ENCODE measurements at regions of chrX and their contacts with region 1.

Region 1: DNA sequence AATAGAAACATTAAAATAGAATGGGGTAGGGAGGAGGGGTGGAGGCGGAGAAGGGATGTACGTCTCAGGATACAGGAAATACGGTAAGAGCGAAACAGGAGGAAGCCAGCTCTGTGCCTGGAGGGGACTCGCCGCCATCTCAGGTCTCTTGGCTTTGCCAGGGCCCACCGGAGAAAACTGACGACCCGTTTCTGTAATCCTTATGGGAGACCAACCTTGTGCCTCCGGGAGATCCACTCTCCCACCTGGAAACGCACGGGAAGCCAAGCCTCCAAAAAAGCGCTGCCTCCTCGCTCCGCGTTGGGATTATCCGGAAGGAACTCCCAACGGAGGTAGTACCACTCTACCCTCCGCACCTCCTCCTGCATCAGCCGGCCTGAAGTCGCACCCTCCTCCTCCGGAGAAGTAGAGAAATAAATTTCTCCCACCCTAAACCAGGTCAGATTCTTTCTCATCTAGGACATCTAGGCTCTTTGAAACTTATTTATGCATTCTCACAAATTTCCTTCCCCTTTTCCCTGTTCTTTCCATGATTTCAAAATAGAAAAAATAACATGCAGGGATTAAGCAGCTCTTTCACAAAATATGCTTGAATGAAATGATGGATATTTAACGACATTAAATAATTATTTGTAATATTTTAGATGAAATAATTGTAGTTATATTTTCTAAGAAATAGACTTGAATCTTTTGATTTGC is at the start of gene NBDY:
- DNase-seq: peak; percentile 58
- H3K4me3 Mint-ChIP-seq: peak within 1 kb of the TSS; percentile 91
- H3K27ac Mint-ChIP-seq: peak within 1 kb of the TSS; percentile 19
- H3K4me1 Mint-ChIP-seq: no peaks in the 10 kb centered on the region
- H3K27me3 Mint-ChIP-seq: peaks cover 41% of the 10 kb centered on the region
- CTCF ChIP-seq: no peak
- total RNA-seq, gene NBDY: 54.0 and 66.4 TPM in 2 replicates

Region 2: GRCh38 chrX:55135171-55135570 is 1594.1 kb before region 1 on chrX:
- CTCF ChIA-PET with region 1: no interaction called
- POLR2A ChIA-PET with region 1: no interaction called
- intact Hi-C with region 1: loop called (anchors 5 kb)
- DNase-seq: peak; percentile 47
- H3K4me3 Mint-ChIP-seq: no peak overlapping the region
- H3K27ac Mint-ChIP-seq: no peak overlapping the region
- H3K4me1 Mint-ChIP-seq: no peaks in the 10 kb centered on the region
- H3K27me3 Mint-ChIP-seq: peaks cover 53% of the 10 kb centered on the region
- CTCF ChIP-seq: peak; percentile 45

Region 3: DNA sequence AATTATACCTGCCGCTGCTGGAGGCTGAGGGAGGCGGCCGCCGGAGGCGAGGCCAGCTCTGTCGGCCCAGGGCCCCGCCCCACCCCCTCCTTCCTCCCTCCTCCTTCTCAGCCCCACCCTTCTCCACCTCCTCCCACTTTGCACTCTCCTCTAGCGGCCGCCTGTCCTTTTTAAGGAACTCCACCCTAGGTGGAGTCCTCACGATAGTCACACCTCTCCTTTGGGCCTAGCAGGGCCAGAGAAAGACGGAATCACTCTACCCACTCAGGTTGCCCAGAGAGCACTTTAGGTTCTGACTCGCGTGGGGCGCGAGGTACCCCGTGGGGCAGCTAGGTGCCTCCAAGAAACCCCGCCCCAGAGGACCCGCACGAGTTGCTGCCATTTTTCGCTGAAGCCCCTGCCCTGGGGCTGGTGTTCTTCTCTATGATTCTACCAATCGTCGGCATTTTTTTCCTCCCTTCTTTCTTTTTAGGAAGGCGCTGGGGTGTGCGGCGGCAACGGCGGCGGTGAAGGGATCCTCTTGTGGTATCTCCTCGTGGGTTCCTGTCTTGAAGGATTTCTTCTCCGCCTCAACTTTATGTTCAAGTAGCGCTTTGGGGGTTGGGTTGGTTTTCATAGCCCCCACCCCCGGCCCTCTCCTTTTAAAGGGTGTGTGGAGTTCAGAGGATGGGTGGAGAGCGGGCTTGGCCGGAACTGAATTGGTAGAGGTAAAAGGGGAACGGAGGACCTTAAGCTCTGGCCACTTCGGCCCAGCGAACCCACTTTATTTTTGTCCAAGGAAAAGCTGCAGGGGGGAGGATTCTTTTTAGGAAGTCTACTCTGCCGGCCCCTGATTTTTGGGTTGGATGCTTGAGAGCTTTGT is 496.8 kb before region 1 on chrX and contains the start of gene KLF8:
- CTCF ChIA-PET with region 1: interaction called, 9 read pairs
- POLR2A ChIA-PET with region 1: interaction called, 11 read pairs
- intact Hi-C with region 1: loop called (anchors 2 kb)
- DNase-seq: peak; percentile 83
- H3K4me3 Mint-ChIP-seq: peak within 1 kb of the TSS; percentile 83
- H3K27ac Mint-ChIP-seq: peak within 1 kb of the TSS; percentile 84
- H3K4me1 Mint-ChIP-seq: peaks cover 13% of the 10 kb centered on the region
- H3K27me3 Mint-ChIP-seq: peaks cover 42% of the 10 kb centered on the region
- CTCF ChIP-seq: no peak
- total RNA-seq, gene KLF8: 12.6 and 14.0 TPM in 2 replicates

Region 4: GRCh38 chrX:56281789-56282188 is 447.5 kb before region 1 on chrX:
- CTCF ChIA-PET with region 1: interaction called, 66 read pairs
- POLR2A ChIA-PET with region 1: interaction called, 4 read pairs
- intact Hi-C with region 1: loop called (anchors 1 kb)
- DNase-seq: peak; percentile 33
- H3K4me3 Mint-ChIP-seq: no peak overlapping the region
- H3K27ac Mint-ChIP-seq: no peak overlapping the region
- H3K4me1 Mint-ChIP-seq: no peaks in the 10 kb centered on the region
- H3K27me3 Mint-ChIP-seq: peaks cover 60% of the 10 kb centered on the region
- CTCF ChIP-seq: peak; percentile 34

Region 5: DNA sequence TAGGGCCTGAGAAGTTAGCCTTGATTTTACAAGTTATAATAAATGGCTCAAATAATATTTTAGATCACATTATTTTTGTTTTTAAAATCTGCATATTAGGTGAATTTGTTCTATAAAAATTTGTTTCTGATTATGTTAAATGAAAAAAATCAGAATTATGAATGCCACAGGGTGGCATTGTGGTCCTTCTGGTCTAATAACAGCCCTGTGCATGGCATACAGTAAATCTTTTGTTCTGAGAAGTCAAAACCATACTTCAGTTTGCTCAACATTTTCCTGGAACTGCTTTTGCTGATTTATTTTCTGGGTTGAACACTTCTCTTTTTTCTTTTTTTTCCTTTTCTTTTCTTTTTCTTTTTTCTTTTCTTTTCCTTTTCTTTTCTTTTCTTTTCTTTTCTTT is 266.9 kb before region 1 on chrX:
- CTCF ChIA-PET with region 1: no interaction called
- POLR2A ChIA-PET with region 1: no interaction called
- intact Hi-C with region 1: loop called (anchors 5 kb)
- DNase-seq: no peak
- H3K4me3 Mint-ChIP-seq: no peak overlapping the region
- H3K27ac Mint-ChIP-seq: no peak overlapping the region
- H3K4me1 Mint-ChIP-seq: no peaks in the 10 kb centered on the region
- H3K27me3 Mint-ChIP-seq: peaks cover 46% of the 10 kb centered on the region
- CTCF ChIP-seq: no peak

Region 6: DNA sequence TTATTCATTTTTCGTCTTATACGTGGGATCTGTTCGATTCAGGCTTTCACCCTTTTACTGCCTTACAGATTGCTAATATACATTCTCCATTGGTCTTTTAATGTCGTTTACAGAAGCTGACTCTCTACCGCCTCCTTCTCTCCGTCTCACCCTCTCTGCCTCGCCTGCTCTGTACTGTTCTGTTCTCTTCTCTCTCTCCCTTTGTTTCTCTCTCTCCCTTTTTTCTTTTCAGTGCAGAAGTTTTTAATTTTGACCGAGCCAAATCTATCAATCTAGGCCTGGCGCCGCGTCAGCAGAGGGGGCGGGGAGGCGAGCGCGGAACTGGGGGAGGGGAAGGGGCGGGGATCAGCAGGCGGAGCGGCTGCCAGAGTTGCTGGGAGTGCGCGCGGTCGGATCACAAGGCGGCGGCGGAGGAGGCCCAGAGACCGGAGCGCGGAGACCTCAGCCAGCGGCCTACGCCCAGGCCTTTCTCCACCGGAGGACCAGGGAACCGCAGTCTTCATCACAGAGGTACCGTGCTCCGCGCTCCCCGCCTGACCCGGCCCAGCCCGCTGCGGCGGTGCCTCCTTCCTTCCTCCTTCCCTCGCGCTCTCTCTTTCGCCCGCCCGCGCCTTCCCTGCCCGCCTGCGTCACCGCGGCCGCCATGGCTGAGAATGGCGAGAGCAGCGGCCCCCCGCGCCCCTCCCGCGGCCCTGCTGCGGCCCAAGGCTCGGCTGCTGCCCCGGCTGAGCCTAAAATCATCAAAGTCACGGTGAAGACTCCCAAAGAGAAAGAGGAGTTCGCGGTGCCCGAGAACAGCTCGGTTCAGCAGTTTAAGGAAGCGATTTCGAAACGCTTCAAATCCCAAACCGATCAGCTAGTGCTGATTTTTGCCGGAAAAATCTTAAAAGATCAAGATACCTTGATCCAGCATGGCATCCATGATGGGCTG is 165.8 kb before region 1 on chrX and contains the start of gene UBQLN2:
- CTCF ChIA-PET with region 1: interaction called, 5 read pairs
- POLR2A ChIA-PET with region 1: interaction called, 15 read pairs
- intact Hi-C with region 1: loop called (anchors 2 kb)
- DNase-seq: peak; percentile 71
- H3K4me3 Mint-ChIP-seq: peak within 1 kb of the TSS; percentile 72
- H3K27ac Mint-ChIP-seq: peak within 1 kb of the TSS; percentile 67
- H3K4me1 Mint-ChIP-seq: no peaks in the 10 kb centered on the region
- H3K27me3 Mint-ChIP-seq: peaks cover 14% of the 10 kb centered on the region
- CTCF ChIP-seq: no peak
- total RNA-seq, gene UBQLN2: 18.0 and 18.9 TPM in 2 replicates

Region 7: DNA sequence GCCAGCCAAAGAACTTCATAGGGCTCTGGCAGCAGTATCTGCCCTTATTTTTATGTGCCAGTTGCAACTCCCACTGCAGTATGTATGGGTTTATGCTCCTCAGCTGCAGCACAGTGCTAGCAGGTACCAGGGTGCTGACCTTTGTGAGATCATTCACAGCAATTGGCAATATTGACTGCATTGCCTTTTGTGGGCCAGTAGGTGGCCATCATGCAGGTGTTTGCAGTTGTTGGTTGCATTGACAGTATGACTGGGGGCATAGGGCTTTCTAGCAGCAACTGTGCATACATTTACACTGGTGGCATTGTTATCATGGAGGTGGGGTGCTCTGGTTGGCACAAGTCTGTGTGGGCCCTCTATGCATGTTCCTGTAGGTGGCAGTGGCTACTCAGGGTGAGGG is 599.7 kb after region 1 on chrX:
- CTCF ChIA-PET with region 1: no interaction called
- POLR2A ChIA-PET with region 1: no interaction called
- intact Hi-C with region 1: no loop called
- DNase-seq: peak; percentile 0
- H3K4me3 Mint-ChIP-seq: no peak overlapping the region
- H3K27ac Mint-ChIP-seq: no peak overlapping the region
- H3K4me1 Mint-ChIP-seq: no peaks in the 10 kb centered on the region
- H3K27me3 Mint-ChIP-seq: peaks cover 11% of the 10 kb centered on the region
- CTCF ChIP-seq: no peak

Measured in MCF 10A (cell line).